Endothelial cell of umbilical vein (primary cell): ENCODE measurements at regions of chr20 and their contacts with region 1.

Region 1: GRCh38 chr20:43942661-43943290 is 28.1 kb downstream of the TOX2 start:
- DNase-seq: peak; percentile 78
- H3K4me3 ChIP-seq: no peak overlapping the region
- H3K27ac ChIP-seq: peak overlapping the region; percentile 75
- H3K4me1 ChIP-seq: peaks cover 46% of the 10 kb centered on the region
- H3K27me3 ChIP-seq: no peaks in the 10 kb centered on the region
- CTCF ChIP-seq: no peak
- POLR2A ChIP-seq: no peak

Region 2: DNA sequence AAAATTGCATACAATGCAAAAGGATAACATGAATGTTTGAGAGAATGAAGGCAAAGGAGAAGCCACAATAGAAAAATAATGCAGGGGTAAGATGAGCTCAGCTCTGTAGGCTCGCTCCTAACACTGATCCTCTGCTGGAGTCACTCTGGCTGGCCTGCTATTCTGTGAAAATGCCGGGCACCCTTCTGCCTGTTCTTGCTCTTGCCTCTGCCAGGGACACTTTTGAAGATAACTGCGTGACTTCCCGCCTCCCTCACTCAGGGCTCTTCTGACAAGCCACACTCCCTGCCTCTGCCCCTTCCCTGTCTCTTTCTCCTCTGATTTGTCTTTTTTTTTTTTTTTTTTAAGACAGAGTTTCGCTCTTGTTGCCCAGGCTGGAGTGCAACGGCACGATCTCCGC is 311.2 kb before region 1 on chr20:
- CTCF ChIA-PET with region 1: no interaction called
- POLR2A ChIA-PET with region 1: no interaction called
- dilution Hi-C with region 1: no loop called
- intact Hi-C with region 1: no loop called
- DNase-seq: no peak
- H3K4me3 ChIP-seq: no peak overlapping the region
- H3K27ac ChIP-seq: no peak overlapping the region
- H3K4me1 ChIP-seq: no peaks in the 10 kb centered on the region
- H3K27me3 ChIP-seq: no peaks in the 10 kb centered on the region
- CTCF ChIP-seq: no peak
- POLR2A ChIP-seq: no peak

Region 3: DNA sequence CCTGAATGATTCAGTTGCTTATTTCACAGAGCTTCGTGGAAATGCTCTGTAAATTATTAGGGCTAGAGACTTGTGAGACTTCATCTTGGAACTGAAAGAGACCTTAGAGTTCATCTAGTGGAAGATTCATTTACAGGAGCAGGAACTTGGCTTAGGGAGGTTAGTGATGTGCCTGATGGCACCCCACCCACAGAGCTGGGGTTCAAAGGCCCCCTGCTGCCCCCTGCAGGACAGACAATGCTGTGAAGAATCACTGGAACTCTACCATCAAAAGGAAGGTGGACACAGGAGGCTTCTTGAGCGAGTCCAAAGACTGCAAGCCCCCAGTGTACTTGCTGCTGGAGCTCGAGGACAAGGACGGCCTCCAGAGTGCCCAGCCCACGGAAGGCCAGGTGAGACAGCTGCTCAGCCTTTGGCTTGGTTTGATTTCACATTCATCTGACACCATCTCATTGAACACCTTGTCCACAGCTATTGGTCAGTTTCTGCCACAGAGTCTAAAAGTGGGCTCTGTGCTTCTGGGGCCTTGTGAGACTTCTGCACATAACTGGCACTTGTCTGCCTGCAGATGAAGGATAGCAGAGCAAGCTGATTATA is 250.8 kb before region 1 on chr20:
- CTCF ChIA-PET with region 1: no interaction called
- POLR2A ChIA-PET with region 1: no interaction called
- dilution Hi-C with region 1: no loop called
- intact Hi-C with region 1: no loop called
- DNase-seq: peak; percentile 37
- H3K4me3 ChIP-seq: no peak overlapping the region
- H3K27ac ChIP-seq: no peak overlapping the region
- H3K4me1 ChIP-seq: no peaks in the 10 kb centered on the region
- H3K27me3 ChIP-seq: no peaks in the 10 kb centered on the region
- CTCF ChIP-seq: peak; percentile 64 to 68
- POLR2A ChIP-seq: no peak

Region 4: DNA sequence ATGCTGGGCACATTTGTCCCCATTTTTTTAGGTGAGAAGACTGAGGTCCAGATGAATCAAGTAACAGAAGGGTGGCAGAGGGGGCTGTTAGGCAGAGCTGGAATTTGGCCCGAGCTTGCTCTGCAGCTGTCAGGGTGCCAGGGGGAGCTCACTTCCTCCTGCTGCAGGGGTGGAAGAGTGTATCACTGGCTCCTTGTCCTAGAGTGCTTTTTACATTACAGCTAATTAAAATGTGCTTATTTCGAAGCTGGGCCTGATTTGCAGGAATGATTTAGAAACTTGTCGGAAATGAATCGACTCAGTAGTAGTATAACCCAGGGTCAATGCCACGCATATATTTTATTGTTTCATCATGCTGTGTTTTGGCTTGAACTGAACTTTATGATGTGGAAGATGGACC is 17.0 kb before region 1 on chr20:
- CTCF ChIA-PET with region 1: interaction called, 13 read pairs
- POLR2A ChIA-PET with region 1: no interaction called
- dilution Hi-C with region 1: no loop called
- intact Hi-C with region 1: no loop called
- DNase-seq: peak; percentile 51
- H3K4me3 ChIP-seq: no peak overlapping the region
- H3K27ac ChIP-seq: no peak overlapping the region
- H3K4me1 ChIP-seq: no peaks in the 10 kb centered on the region
- H3K27me3 ChIP-seq: peaks cover 4 to 7% of the 10 kb centered on the region in 2 experiments
- CTCF ChIP-seq: no peak
- POLR2A ChIP-seq: no peak

Region 5: DNA sequence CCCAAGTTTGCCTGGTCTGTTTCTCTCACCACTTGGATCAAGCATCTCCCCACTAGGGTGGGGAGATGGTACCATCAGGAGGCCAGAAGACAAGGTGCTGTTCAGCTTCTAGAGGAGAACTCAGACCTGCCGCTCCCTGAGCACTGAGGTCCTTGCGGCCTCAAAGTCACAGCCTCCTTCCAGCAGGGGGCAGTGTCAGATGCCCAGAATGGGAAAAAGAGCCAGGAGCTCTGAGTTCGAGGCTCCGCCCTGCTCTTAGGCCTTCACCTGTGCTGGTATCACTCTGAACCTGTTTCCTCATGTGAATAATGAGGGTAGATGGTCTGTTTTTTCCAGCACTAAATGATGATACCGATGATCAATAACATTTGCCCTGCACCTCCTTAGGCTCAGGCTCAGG is 40.6 kb after region 1 on chr20:
- CTCF ChIA-PET with region 1: interaction called, 6 read pairs
- POLR2A ChIA-PET with region 1: no interaction called
- dilution Hi-C with region 1: no loop called
- intact Hi-C with region 1: loop called (anchors 1 kb)
- DNase-seq: no peak
- H3K4me3 ChIP-seq: no peak overlapping the region
- H3K27ac ChIP-seq: peak overlapping the region; percentile 71
- H3K4me1 ChIP-seq: peaks cover 23% of the 10 kb centered on the region
- H3K27me3 ChIP-seq: no peaks in the 10 kb centered on the region
- CTCF ChIP-seq: peak; percentile 22 to 33
- POLR2A ChIP-seq: no peak